ENCODE measurements at regions of chr5 and their contacts with region 1.

Region 1: GRCh38 chr5:75511435-75512384 is at the starts of genes CERT1 and POLK:
- DNase-seq: peak; percentile 99
- ATAC-seq: peak; percentile 98
- H3K4me3 ChIP-seq: peak within 1 kb of the TSS; percentile 67 to 73
- H3K27ac ChIP-seq: peak within 1 kb of the TSS; percentile 29 to 73
- H3K4me1 ChIP-seq: peaks cover 0 to 5% of the 10 kb centered on the region in 2 donors
- H3K27me3 ChIP-seq: no peaks in the 10 kb centered on the region
- total RNA-seq, gene CERT1: 33.2 to 41.7 TPM
- total RNA-seq, gene POLK: 45.1 to 58.4 TPM

Region 2: GRCh38 chr5:75558981-75559632 is 47.4 kb after region 1 on chr5:
- intact Hi-C with region 1: loop called in 1 of 2 experiments (anchors 5 kb)
- DNase-seq: no peak
- ATAC-seq: peak; percentile 62
- H3K4me3 ChIP-seq: no peak overlapping the region
- H3K27ac ChIP-seq: no peak overlapping the region
- H3K4me1 ChIP-seq: no peaks in the 10 kb centered on the region
- H3K27me3 ChIP-seq: no peaks in the 10 kb centered on the region

Region 3: GRCh38 chr5:75574791-75575190 is 63.1 kb after region 1 on chr5:
- intact Hi-C with region 1: loop called (anchors 2 to 5 kb)
- DNase-seq: no peak
- ATAC-seq: no peak
- H3K4me3 ChIP-seq: no peak overlapping the region
- H3K27ac ChIP-seq: peak overlapping the region; percentile 22 to 63
- H3K4me1 ChIP-seq: peaks cover 2 to 4% of the 10 kb centered on the region in 2 donors
- H3K27me3 ChIP-seq: no peaks in the 10 kb centered on the region

Region 4: DNA sequence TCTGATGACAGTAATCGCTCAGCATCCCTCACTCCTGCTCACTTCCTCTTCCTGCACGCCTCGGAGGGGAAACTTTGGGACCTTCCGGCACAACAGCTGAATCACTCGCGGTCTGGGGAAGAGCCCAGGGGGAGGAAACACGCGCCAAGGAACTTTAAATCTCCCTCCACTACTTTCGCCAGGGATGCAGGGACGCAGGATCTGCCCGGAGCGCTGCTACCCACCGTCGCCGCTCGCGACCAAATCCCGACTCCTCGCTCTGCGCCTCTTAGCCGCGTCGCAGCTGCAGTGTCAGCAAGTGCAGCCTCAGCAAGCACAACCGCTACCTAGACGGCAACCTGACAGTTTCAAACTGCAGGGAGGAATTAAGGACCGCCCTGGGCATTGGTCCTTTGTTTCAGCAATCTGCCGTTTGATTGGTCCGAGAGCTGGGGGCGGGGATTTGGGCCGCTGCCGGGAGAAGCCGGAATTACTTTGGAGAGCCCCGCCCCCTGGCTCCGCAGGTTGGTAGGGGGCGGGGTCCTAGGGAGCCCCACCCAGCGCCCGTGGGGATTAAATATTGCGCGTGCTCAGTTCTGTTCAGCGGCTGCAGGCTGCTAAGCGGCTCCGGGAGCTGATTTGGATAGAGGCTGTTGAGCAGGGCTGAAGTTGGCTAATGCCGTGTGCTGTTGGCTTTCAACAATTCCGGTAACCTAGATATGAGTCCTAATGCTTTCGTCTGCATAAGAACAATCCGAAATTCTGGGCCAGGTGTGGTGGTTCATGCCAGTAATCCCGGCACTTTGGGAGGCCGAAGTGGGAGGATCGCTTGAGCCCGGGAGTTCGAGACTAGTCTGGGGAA is 205.6 kb after region 1 on chr5 and contains the start of gene POC5:
- intact Hi-C with region 1: loop called in 1 of 2 experiments (anchors 10 kb)
- DNase-seq: peak; percentile 98 to 99
- ATAC-seq: peak; percentile 99
- H3K4me3 ChIP-seq: peak within 1 kb of the TSS; percentile 58 to 71
- H3K27ac ChIP-seq: peak within 1 kb of the TSS in 1 of 2 donors; percentile 80
- H3K4me1 ChIP-seq: no peaks in the 10 kb centered on the region
- H3K27me3 ChIP-seq: no peaks in the 10 kb centered on the region
- total RNA-seq, gene POC5: 8.7 to 11.8 TPM